Common myeloid progenitor, CD34-positive (primary cell): ENCODE measurements at regions of chr4 and their contacts with region 1.

Region 1: DNA sequence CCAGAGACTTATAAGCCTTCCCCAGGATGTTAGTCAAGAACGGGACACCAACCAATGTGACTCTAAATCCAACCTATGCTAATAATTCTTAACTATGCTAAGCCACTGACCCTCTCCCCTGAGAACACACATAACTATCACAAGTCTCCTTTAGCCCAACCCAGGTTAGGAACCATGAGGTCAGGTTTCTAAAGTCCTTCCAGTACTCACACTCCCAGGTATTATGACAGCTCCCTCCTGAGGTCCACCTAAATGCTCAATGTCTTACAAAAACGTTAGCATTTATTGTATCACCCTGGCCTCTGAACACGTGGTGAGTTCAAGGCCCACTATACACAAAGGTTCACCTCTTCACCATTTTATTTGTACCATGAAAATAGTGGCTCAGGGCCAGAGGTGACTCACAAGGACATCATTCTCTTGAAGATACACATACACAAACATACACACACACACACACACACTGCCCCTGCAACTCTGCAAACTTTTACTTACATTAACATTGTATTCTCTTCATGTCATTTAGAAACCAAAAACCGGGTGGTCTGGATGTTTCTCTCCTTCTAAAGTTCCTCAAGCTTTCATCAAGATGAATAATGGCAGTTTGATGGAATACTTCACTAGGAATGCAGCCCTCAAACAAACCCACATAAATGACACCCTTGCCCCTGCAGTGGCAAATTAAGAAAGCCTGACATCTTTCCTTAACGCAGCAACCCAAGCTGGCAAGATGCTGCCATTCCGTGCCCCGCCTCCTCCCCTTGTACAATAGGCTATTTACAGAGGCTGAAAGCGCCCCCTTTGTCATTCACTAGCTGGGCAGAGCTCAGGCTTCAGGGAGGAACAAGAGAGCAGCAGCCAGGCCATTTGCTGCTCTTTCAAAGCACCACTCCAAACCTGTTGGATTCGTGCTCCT is 17.7 kb downstream of the ACSL1 start:
- DNase-seq: peak in 1 of 3 donors; percentile 38
- H3K4me3 ChIP-seq: no peak overlapping the region
- H3K27ac ChIP-seq: no peak overlapping the region
- H3K4me1 ChIP-seq: peaks cover 0 to 15% (median 5%) of the 10 kb centered on the region in 4 experiments
- H3K27me3 ChIP-seq: no peaks in the 10 kb centered on the region

Region 2: DNA sequence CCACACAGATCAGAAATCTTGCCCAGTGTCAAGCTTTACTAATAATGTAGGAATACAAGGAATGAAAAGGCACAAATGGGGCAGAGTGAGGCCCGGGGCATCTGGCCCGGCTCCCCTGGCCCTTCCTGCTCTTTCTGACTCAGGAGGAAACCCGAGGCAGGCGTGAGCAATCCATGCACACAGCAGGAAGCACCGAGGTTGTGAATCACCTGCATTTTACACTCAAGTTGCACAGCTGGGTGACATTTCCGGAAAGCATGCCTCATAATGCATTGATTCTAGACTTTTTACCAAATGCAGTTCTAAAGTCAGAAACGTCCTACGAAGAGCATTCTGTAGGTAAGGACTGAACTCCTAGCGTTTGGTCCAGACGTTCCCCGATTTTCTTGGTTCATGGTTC is 119.6 kb before region 1 on chr4:
- CTCF ChIA-PET with region 1: no interaction called
- POLR2A ChIA-PET with region 1: no interaction called
- DNase-seq: peak; percentile 16 to 78 (median 72)
- H3K4me3 ChIP-seq: no peak overlapping the region
- H3K27ac ChIP-seq: no peak overlapping the region
- H3K4me1 ChIP-seq: peaks cover 15 to 41% (median 24%) of the 10 kb centered on the region in 4 experiments
- H3K27me3 ChIP-seq: no peaks in the 10 kb centered on the region

Region 3: DNA sequence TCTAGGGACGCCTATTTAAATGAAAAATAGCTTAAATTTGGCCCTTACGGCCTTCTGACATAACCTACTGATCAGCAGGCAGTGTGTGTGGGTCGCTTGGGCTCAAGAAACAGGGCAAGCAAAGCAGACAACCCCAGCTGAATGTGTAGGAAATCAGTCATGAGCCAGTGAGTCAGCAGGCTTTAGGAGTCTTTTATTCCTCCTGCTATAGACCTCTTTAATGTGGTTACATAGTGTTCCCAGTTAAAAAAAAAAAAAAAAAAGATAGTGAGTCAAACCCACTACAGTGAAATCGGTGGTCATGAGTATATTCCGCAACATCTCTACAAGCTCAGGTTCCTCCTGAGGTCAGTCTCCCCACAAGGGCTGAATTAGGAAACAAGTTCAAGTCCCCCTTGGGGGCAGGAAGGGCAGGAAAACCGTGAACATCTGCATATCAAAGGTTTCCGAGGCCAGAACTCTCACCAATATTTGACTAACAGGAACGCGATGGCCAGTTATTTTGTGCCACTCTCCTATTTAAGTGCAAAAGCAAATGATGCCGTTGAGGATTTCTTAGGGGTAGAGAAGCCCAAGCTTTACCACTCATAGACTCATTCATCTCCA is 15.0 kb before region 1 on chr4:
- CTCF ChIA-PET with region 1: interaction called, 11 read pairs
- POLR2A ChIA-PET with region 1: interaction called, 3 read pairs
- DNase-seq: peak; percentile 87 to 94 (median 91)
- H3K4me3 ChIP-seq: peak overlapping the region in 1 of 7 experiments; percentile 42
- H3K27ac ChIP-seq: peak overlapping the region in 1 of 2 experiments; percentile 17
- H3K4me1 ChIP-seq: peaks cover 21 to 35% (median 32%) of the 10 kb centered on the region in 4 experiments
- H3K27me3 ChIP-seq: no peaks in the 10 kb centered on the region